Heart right ventricle (tissue), 16 donors: ENCODE measurements at regions of chr18 and their contacts with region 1.

Region 1: GRCh38 chr18:61754039-61754583 is 138.7 kb downstream of the RNF152 start:
- DNase-seq: no peak
- ATAC-seq: peak in 1 of 8 donors; percentile 57
- H3K4me3 ChIP-seq: no peak overlapping the region
- H3K27ac ChIP-seq: no peak overlapping the region
- H3K4me1 ChIP-seq: peaks cover 0 to 46% (median 15%) of the 10 kb centered on the region in 9 donors
- H3K27me3 ChIP-seq: no peaks in the 10 kb centered on the region
- CTCF ChIP-seq: no peak

Region 2: GRCh38 chr18:61690418-61691138 is 63.5 kb before region 1 on chr18:
- intact Hi-C with region 1: no loop called
- DNase-seq: no peak
- ATAC-seq: no peak
- H3K4me3 ChIP-seq: no peak overlapping the region
- H3K27ac ChIP-seq: no peak overlapping the region
- H3K4me1 ChIP-seq: no peaks in the 10 kb centered on the region
- H3K27me3 ChIP-seq: no peaks in the 10 kb centered on the region
- CTCF ChIP-seq: no peak

Region 3: GRCh38 chr18:61797696-61798590 is 43.8 kb after region 1 on chr18:
- intact Hi-C with region 1: no loop called
- DNase-seq: no peak
- ATAC-seq: no peak
- H3K4me3 ChIP-seq: no peak overlapping the region
- H3K27ac ChIP-seq: no peak overlapping the region
- H3K4me1 ChIP-seq: no peaks in the 10 kb centered on the region
- H3K27me3 ChIP-seq: no peaks in the 10 kb centered on the region
- CTCF ChIP-seq: no peak

Region 4: GRCh38 chr18:61865466-61866175 is 111.5 kb after region 1 on chr18:
- intact Hi-C with region 1: loop called in 1 of 10 experiments (anchors 10 kb)
- DNase-seq: no peak
- ATAC-seq: peak in 1 of 8 donors; percentile 26
- H3K4me3 ChIP-seq: no peak overlapping the region
- H3K27ac ChIP-seq: peak overlapping the region in 3 of 10 donors; percentile 0 to 49 (median 11)
- H3K4me1 ChIP-seq: peaks cover 0 to 78% (median 27%) of the 10 kb centered on the region in 9 donors
- H3K27me3 ChIP-seq: no peaks in the 10 kb centered on the region
- CTCF ChIP-seq: no peak

Region 5: GRCh38 chr18:61882296-61883004 is 128.3 kb after region 1 on chr18:
- intact Hi-C with region 1: loop called in 1 of 10 experiments (anchors 10 kb)
- DNase-seq: no peak
- ATAC-seq: peak in 2 of 8 donors; percentile 22 to 37
- H3K4me3 ChIP-seq: no peak overlapping the region
- H3K27ac ChIP-seq: no peak overlapping the region
- H3K4me1 ChIP-seq: peaks cover 0 to 63% (median 4%) of the 10 kb centered on the region in 9 donors
- H3K27me3 ChIP-seq: no peaks in the 10 kb centered on the region
- CTCF ChIP-seq: no peak